ENCODE measurements at regions of chr20 and their contacts with region 1.

Region 1: GRCh38 chr20:23050847-23051631 is 1.6 kb upstream of the THBD start:
- ATAC-seq: peak; percentile 30 to 75 (median 48)
- H3K4me3 ChIP-seq: peak overlapping the region in 3 of 5 donors; percentile 23 to 28 (median 24)
- H3K27ac ChIP-seq: no peak overlapping the region
- H3K4me1 ChIP-seq: peaks cover 0 to 14% of the 10 kb centered on the region in 2 donors

Region 2: DNA sequence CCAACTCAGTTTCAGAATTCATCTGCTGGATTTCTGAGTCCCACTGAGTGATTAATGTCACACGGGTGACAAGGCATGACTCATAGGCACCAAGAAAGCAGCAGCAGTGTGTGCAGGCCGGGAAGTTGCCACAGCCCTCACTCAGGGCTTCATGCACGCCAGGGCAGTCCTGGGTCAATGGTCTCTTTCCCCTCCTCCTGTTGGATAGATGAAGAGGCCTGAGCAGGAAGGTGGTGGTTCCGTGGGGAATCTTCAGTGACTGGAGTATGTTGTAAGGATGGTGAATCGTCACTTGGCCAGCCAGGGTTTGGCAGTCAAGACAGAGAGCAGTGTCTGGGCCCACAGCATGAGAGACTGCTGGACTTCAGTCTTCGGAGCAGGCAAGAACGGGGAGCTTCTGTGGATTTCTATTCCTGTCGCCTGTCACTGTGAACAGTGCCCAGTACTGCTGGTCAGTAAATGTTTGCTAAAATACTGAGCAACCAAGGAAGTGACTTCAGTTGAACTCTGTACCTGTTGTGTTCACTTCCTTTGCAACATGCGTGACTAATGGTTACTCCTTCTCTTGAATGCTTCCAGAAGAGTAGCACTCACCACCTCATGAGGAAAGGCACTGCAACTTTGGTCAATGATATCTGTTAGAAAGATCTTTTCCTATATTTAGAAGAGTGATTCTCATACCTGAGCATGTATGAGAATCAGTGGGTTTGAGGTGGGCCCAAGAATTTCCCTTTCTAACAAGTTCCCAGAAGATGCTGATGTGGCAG is 97.1 kb after region 1 on chr20:
- in situ Hi-C with region 1: no loop called
- ATAC-seq: peak; percentile 47 to 83 (median 70)
- H3K4me3 ChIP-seq: no peak overlapping the region
- H3K27ac ChIP-seq: peak overlapping the region in 1 of 2 donors; percentile 64
- H3K4me1 ChIP-seq: peaks cover 0 to 16% of the 10 kb centered on the region in 2 donors

Region 3: GRCh38 chr20:23235173-23236027 is 184.4 kb after region 1 on chr20:
- in situ Hi-C with region 1: loop called in 1 of 9 experiments (anchors 10 kb)
- ATAC-seq: peak; percentile 88 to 99 (median 94)
- H3K4me3 ChIP-seq: no peak overlapping the region
- H3K27ac ChIP-seq: no peak overlapping the region
- H3K4me1 ChIP-seq: no peaks in the 10 kb centered on the region